ENCODE measurements at regions of chr15 and their contacts with region 1.

Region 1: GRCh38 chr15:39125904-39126303 is 455.0 kb upstream of the THBS1 start:
- DNase-seq: no peak
- H3K4me3 ChIP-seq: no peak overlapping the region
- H3K27ac ChIP-seq: no peak overlapping the region
- H3K4me1 ChIP-seq: peaks cover 3 to 14% of the 10 kb centered on the region in 2 donors
- H3K27me3 ChIP-seq: no peaks in the 10 kb centered on the region
- CTCF ChIP-seq: peak in 2 of 3 experiments; percentile 31 to 40

Region 2: DNA sequence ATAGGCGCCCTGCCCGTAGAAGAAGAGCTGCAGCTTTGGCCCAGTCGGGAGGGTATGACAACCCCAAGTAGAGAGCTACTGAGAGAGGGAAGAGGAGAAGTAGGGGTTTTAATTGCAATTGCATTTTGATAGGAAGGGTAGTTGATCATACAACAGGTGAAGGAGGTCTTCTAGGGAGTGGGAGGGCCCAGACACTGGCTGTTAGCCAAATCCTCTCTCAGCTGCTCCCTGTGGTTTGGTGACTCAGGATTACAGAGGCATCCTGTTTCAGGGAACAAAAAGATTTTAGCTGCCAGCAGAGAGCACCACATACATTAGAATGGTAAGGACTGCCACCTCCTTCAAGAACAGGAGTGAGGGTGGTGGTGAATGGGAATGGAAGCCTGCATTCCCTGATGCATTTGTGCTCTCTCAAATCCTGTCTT is 46.1 kb after region 1 on chr15:
- intact Hi-C with region 1: loop called (anchors 5 kb)
- DNase-seq: peak in 1 of 2 donors; percentile 70
- H3K4me3 ChIP-seq: no peak overlapping the region
- H3K27ac ChIP-seq: no peak overlapping the region
- H3K4me1 ChIP-seq: no peaks in the 10 kb centered on the region
- H3K27me3 ChIP-seq: no peaks in the 10 kb centered on the region
- CTCF ChIP-seq: peak; percentile 13 to 30 (median 17)

Measured in ascending aorta (tissue), 2 donors.